Mammary epithelial cell (primary cell): ENCODE measurements at regions of chr9 and their contacts with region 1.

Region 1: DNA sequence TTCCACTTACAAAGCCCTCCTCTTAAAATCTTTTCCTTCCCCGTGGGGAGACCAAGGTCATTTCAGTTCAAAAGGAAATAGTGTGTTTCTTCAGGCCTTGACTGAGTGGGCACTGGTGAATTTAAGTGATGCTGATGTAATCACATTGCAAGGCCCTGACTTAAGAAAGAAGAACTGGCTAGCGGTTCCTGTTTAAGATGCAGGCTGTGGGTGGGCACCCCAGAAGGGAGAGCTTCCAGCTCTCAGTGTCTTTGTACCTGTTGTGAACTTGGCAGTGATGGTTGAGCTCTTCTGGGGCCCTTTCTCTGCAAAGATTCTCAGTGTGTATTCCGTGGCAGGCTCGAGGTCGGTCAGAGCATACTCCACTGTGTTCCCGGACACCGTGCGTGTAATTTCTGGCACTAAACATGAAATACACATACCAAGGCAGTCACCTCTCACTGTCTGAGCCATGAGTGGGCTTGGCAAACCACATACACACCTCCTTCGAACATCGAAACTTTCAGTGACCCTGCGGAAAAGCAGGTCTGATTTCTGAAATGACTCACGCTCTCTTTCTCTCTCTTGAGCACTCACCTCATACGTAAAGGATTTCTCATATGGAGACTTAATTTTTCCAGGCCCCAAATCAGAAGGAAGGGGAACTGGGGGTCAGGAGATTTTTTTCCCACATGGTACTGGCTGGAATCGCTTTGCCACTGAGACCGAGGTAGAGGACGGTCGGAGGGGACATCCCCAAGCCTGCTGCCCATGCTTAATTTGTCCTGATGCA is 81.9 kb downstream of the TNC start:
- DNase-seq: peak; percentile 99
- H3K4me3 ChIP-seq: no peak overlapping the region
- H3K27ac ChIP-seq: peak overlapping the region; percentile 99
- H3K4me1 ChIP-seq: peaks cover 34% of the 10 kb centered on the region
- H3K27me3 ChIP-seq: no peaks in the 10 kb centered on the region
- CTCF ChIP-seq: no peak

Region 2: DNA sequence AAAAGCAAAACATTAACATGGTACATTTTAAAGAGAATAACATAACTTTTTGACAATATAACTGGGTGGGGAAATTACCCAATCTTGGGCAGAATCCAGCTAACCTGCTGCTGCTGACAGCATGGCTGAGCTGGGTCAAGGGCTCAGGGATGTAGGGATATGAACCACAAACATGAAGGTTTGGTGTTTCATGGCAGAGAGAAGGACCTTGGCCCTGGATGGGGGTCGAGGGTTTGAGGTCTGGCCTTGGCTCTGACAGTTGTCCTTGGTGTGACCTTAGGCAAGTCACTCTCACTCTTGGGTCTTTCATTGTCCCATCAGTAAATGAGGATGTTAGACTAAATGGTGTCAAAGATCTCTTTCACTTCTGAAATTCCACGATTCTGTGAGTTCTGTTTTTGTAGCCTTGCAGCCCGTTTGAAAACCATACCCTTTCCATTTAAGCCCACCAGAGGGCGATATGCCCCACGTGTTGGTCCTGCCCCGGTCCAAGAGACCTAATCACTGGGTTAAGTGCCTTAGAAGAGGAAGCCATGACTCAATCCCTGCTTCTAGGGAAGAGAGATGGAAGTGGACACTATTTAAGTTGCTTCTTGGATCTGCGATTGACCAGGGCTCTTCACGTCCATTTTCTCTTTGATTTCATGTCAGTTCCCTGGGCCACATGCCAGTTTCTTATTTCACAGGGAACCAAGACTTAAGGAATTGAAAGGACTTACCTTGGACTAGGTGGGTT is 297.3 kb before region 1 on chr9:
- CTCF ChIA-PET with region 1: no interaction called
- dilution Hi-C with region 1: no loop called
- in situ Hi-C with region 1: no loop called
- intact Hi-C with region 1: loop called (anchors 1 kb)
- DNase-seq: peak; percentile 78
- H3K4me3 ChIP-seq: no peak overlapping the region
- H3K27ac ChIP-seq: no peak overlapping the region
- H3K4me1 ChIP-seq: peaks cover 5% of the 10 kb centered on the region
- H3K27me3 ChIP-seq: no peaks in the 10 kb centered on the region
- CTCF ChIP-seq: peak; percentile 71 to 81

Region 3: DNA sequence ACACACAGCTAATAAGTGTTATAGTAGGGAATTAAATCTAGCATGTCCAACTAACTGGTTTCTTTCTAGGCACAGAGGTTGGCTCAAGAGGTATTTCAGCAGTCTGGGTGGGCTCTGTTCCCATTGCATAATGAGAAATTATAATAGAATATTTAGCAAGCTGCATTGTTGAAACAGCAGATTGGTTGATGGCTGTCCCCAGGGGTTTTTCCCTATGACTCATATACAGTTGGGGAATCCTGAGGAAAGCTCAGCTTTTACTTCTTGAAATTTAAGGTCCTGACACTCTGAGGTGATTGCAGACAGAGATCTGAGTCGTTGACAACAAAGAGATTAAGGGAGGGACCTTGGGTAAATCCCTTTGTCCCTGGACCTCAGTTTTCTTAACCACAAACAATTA is 67.4 kb before region 1 on chr9:
- CTCF ChIA-PET with region 1: no interaction called
- dilution Hi-C with region 1: no loop called
- in situ Hi-C with region 1: no loop called
- intact Hi-C with region 1: no loop called
- DNase-seq: peak; percentile 44
- H3K4me3 ChIP-seq: no peak overlapping the region
- H3K27ac ChIP-seq: no peak overlapping the region
- H3K4me1 ChIP-seq: no peaks in the 10 kb centered on the region
- H3K27me3 ChIP-seq: no peaks in the 10 kb centered on the region
- CTCF ChIP-seq: no peak

Region 4: GRCh38 chr9:115058684-115059315 is 22.8 kb after region 1 on chr9:
- CTCF ChIA-PET with region 1: no interaction called
- dilution Hi-C with region 1: no loop called
- in situ Hi-C with region 1: no loop called
- intact Hi-C with region 1: loop called (anchors 1 kb)
- DNase-seq: peak; percentile 90
- H3K4me3 ChIP-seq: no peak overlapping the region
- H3K27ac ChIP-seq: peak overlapping the region; percentile 87
- H3K4me1 ChIP-seq: peaks cover 48% of the 10 kb centered on the region
- H3K27me3 ChIP-seq: no peaks in the 10 kb centered on the region
- CTCF ChIP-seq: no peak

Region 5: DNA sequence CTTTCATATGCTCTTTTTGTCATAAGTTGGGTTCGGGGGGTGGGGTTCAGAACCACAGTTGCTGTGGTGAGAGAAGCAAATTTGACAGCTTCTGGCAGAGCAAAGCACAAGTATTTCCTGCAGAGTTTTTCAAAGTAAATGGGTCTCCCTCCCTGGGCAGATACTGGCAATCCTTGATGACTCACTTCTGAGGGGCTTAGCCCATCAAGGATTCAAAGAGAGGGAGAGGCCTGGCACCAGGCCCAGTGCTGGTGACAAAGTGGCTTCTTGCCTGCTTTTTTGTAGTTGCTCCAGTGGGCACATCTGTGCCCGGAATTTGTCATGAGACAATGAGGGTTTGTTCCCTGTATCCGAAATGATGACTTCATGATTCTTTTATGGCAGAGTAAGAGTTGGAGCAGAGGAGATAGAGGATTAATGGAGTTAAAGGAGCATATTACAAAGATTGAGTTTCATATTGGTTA is 128.5 kb after region 1 on chr9:
- CTCF ChIA-PET with region 1: interaction called, 25 read pairs
- dilution Hi-C with region 1: no loop called
- in situ Hi-C with region 1: no loop called
- intact Hi-C with region 1: no loop called
- DNase-seq: peak; percentile 61
- H3K4me3 ChIP-seq: no peak overlapping the region
- H3K27ac ChIP-seq: peak overlapping the region; percentile 26
- H3K4me1 ChIP-seq: peaks cover 28% of the 10 kb centered on the region
- H3K27me3 ChIP-seq: no peaks in the 10 kb centered on the region
- CTCF ChIP-seq: no peak

Region 6: GRCh38 chr9:115204904-115205453 is 169.0 kb after region 1 on chr9:
- CTCF ChIA-PET with region 1: no interaction called
- dilution Hi-C with region 1: no loop called
- in situ Hi-C with region 1: no loop called
- intact Hi-C with region 1: loop called (anchors 2 kb)
- DNase-seq: peak; percentile 92
- H3K4me3 ChIP-seq: no peak overlapping the region
- H3K27ac ChIP-seq: peak overlapping the region; percentile 63
- H3K4me1 ChIP-seq: peaks cover 65% of the 10 kb centered on the region
- H3K27me3 ChIP-seq: no peaks in the 10 kb centered on the region
- CTCF ChIP-seq: no peak

Region 7: GRCh38 chr9:115262477-115262876 is 226.4 kb after region 1 on chr9:
- CTCF ChIA-PET with region 1: no interaction called
- dilution Hi-C with region 1: no loop called
- in situ Hi-C with region 1: no loop called
- intact Hi-C with region 1: loop called (anchors 1 kb)
- DNase-seq: peak; percentile 100
- H3K4me3 ChIP-seq: no peak overlapping the region
- H3K27ac ChIP-seq: peak overlapping the region; percentile 100
- H3K4me1 ChIP-seq: peaks cover 41% of the 10 kb centered on the region
- H3K27me3 ChIP-seq: no peaks in the 10 kb centered on the region
- CTCF ChIP-seq: no peak

Region 8: GRCh38 chr9:115373000-115373709 is 337.1 kb after region 1 on chr9:
- CTCF ChIA-PET with region 1: no interaction called
- dilution Hi-C with region 1: no loop called
- in situ Hi-C with region 1: no loop called
- intact Hi-C with region 1: loop called (anchors 2 kb)
- DNase-seq: peak; percentile 97
- H3K4me3 ChIP-seq: peak overlapping the region in 1 of 3 experiments; percentile 8
- H3K27ac ChIP-seq: peak overlapping the region; percentile 90
- H3K4me1 ChIP-seq: peaks cover 36% of the 10 kb centered on the region
- H3K27me3 ChIP-seq: no peaks in the 10 kb centered on the region
- CTCF ChIP-seq: peak in 1 of 2 donors; percentile 29